ENCODE measurements at regions of chr14 and their contacts with region 1.

Region 1: DNA sequence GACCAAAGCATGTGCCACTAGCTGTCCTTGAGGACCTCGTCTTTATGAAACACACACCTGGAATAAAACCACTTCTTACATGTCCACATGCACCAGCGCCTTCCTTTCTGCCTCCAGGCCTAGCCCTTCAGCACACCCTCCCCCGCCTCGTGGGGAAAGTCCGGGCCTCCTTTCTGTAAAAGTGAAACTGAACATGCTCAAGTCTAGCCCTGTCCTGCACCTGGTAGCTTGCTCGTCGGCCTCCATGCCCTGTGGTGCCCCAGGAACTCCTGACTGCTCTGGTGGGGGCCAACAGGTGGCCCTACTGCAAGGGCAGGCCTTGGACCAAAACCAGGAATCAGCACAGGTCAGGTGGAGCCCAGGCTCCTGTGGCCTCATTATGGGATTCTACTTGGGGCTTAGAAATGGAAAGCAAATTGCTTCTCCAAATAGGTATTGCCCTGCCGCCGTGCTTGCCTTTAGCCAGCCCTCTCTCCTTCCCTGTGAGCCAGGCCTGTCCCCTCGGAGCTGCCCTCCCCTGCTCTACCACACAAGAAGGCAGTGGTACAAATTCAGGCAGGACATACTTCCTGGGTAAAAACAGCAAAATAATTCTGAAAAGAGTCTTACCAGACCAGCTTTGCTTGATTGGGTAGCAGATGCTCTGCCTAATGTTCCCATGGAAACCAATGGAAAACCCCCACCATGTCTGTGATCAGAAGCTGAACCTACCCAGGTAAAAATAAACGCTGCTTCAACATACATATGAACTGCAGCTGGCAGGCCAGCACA is 43.5 kb downstream of the ERH start:
- DNase-seq: no peak
- H3K4me3 ChIP-seq: no peak overlapping the region
- H3K27ac ChIP-seq: no peak overlapping the region
- H3K4me1 ChIP-seq: peaks cover 0 to 5% (median 2%) of the 10 kb centered on the region in 4 experiments; a peak in 4 of 7 replicates
- H3K27me3 ChIP-seq: no peaks in the 10 kb centered on the region
- CTCF ChIP-seq: no peak
- EP300 ChIP-seq: no peak
- POLR2A ChIP-seq: no peak
- RAD21 ChIP-seq: no peak

Region 2: GRCh38 chr14:69325646-69326265 is 28.8 kb before region 1 on chr14:
- CTCF ChIA-PET with region 1: interaction called, 140 read pairs
- POLR2A ChIA-PET with region 1: interaction called, 3 read pairs
- DNase-seq: no peak
- H3K4me3 ChIP-seq: no peak overlapping the region
- H3K27ac ChIP-seq: no peak overlapping the region
- H3K4me1 ChIP-seq: peaks cover 0 to 15% (median 6%) of the 10 kb centered on the region in 4 experiments; a peak in 6 of 7 replicates
- H3K27me3 ChIP-seq: no peaks in the 10 kb centered on the region
- CTCF ChIP-seq: peak; percentile 32 to 50 (median 39)
- EP300 ChIP-seq: no peak
- POLR2A ChIP-seq: no peak
- RAD21 ChIP-seq: peak; percentile 22 to 28; a peak in 1 of 4 replicates

Region 3: DNA sequence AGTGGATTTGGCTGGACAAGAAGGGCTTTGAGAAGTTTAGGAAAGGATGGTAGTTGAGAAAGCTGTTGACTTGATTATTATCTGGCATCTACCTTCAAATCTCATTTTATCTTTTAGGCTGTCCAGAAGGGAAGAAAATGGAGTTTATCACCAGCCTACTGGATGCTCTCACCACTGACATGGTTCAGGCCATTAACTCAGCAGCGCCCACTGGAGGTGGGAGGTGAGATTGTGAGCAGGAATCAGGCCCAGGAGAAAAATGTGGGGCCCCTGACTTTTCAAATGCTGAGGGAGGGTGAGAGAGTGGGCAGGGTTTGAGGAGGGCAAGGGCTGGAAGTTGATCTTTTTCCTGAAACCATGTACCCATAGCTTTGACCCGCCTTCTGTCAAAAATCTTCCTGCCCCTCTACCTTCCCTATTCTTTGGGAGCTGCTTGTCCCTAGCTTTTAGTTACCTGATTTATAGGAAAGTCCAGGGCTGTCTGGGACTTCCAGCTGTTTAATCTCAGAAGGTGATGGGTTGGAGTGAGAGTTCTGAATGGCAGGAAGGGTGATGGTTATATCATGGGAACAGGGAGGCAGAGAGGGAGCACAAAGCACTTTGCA is 658.8 kb after region 1 on chr14:
- CTCF ChIA-PET with region 1: no interaction called
- POLR2A ChIA-PET with region 1: no interaction called
- DNase-seq: peak; percentile 34 to 94
- H3K4me3 ChIP-seq: no peak overlapping the region
- H3K27ac ChIP-seq: no peak overlapping the region
- H3K4me1 ChIP-seq: peaks cover 0 to 8% (median 5%) of the 10 kb centered on the region in 4 experiments; a peak in 3 of 7 replicates
- H3K27me3 ChIP-seq: no peaks in the 10 kb centered on the region
- CTCF ChIP-seq: peak; percentile 85 to 92 (median 89)
- EP300 ChIP-seq: no peak
- POLR2A ChIP-seq: no peak
- RAD21 ChIP-seq: peak; percentile 77 to 87

Measured in H1 (cell line).